PC-3 (cell line): ENCODE measurements at regions of chr5 and their contacts with region 1.

Region 1: GRCh38 chr5:73764586-73764985 is 138.6 kb downstream of the ARHGEF28 start:
- DNase-seq: peak; percentile 88
- ATAC-seq: peak; percentile 99
- H3K4me3 ChIP-seq: 0 out of 2 replicates have a peak overlapping the region, but pooled peaks have one; percentile 9
- H3K27ac ChIP-seq: peak overlapping the region; percentile 84
- H3K4me1 ChIP-seq: peaks cover 29% of the 10 kb centered on the region
- H3K27me3 ChIP-seq: no peaks in the 10 kb centered on the region
- CTCF ChIP-seq: no peak

Region 2: DNA sequence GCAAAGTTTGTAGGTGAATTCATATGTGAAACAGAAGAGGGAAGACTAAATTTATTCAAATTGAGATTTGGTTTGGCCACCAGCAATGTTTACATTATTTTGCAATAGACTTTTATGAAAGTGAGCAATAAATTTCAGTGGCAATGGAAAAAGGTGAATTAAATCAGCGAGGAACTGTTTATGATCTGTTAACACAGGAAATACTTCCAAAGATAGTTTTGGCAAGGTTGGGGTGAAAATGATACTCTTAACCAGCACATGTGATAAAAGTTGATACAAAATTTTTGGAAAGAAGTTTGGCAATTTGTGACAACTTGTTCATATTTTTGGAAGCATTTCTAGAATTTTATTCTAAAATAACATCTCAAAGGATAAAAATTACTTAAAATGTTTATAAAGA is 18.8 kb before region 1 on chr5:
- CTCF ChIA-PET with region 1: no interaction called
- POLR2A ChIA-PET with region 1: no interaction called
- intact Hi-C with region 1: loop called (anchors 1 kb)
- DNase-seq: peak; percentile 46
- ATAC-seq: peak; percentile 49
- H3K4me3 ChIP-seq: no peak overlapping the region
- H3K27ac ChIP-seq: peak overlapping the region; percentile 21; the same call in 1 of the 2 replicates
- H3K4me1 ChIP-seq: peaks cover 19% of the 10 kb centered on the region
- H3K27me3 ChIP-seq: no peaks in the 10 kb centered on the region
- CTCF ChIP-seq: no peak